Endothelial cell of umbilical vein (primary cell): ENCODE measurements at regions of chr6 and their contacts with region 1.

Region 1: GRCh38 chr6:151974061-151974617 is 166.7 kb downstream of the ESR1 start:
- DNase-seq: peak; percentile 56
- H3K4me3 ChIP-seq: no peak overlapping the region
- H3K27ac ChIP-seq: peak overlapping the region; percentile 9
- H3K4me1 ChIP-seq: peaks cover 16% of the 10 kb centered on the region
- H3K27me3 ChIP-seq: no peaks in the 10 kb centered on the region
- CTCF ChIP-seq: no peak
- POLR2A ChIP-seq: no peak

Region 2: DNA sequence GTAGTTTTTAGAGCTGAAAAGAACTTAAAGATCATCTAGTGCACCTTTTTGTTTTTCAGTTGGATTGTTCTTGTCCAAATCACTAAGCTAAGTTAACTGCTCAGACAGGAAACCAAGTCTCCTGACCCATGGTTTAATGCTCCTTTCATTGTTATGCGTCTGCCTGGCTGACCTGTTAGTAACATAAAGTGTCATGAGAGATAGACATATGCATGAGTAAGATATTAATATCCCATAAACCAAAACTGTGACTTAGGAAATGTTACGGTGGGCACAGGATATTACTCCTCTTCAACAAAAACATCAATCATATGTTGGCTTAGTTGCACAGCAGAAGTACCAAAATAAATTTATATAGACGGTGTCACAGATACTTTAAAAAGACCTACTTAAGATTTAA is 82.6 kb before region 1 on chr6:
- CTCF ChIA-PET with region 1: no interaction called
- POLR2A ChIA-PET with region 1: no interaction called
- dilution Hi-C with region 1: no loop called
- intact Hi-C with region 1: loop called (anchors 1 kb)
- DNase-seq: peak; percentile 96
- H3K4me3 ChIP-seq: peak overlapping the region in 1 of 3 experiments; percentile 23
- H3K27ac ChIP-seq: peak overlapping the region; percentile 60
- H3K4me1 ChIP-seq: peaks cover 19% of the 10 kb centered on the region
- H3K27me3 ChIP-seq: no peaks in the 10 kb centered on the region
- CTCF ChIP-seq: no peak
- POLR2A ChIP-seq: no peak

Region 3: GRCh38 chr6:152244998-152245630 is 271.0 kb after region 1 on chr6:
- CTCF ChIA-PET with region 1: no interaction called
- POLR2A ChIA-PET with region 1: no interaction called
- dilution Hi-C with region 1: no loop called
- intact Hi-C with region 1: no loop called
- DNase-seq: peak; percentile 74
- H3K4me3 ChIP-seq: no peak overlapping the region
- H3K27ac ChIP-seq: no peak overlapping the region
- H3K4me1 ChIP-seq: no peaks in the 10 kb centered on the region
- H3K27me3 ChIP-seq: no peaks in the 10 kb centered on the region
- CTCF ChIP-seq: no peak
- POLR2A ChIP-seq: no peak